CD4-positive, alpha-beta T cell (primary cell): ENCODE measurements at regions of chr16 and their contacts with region 1.

Region 1: DNA sequence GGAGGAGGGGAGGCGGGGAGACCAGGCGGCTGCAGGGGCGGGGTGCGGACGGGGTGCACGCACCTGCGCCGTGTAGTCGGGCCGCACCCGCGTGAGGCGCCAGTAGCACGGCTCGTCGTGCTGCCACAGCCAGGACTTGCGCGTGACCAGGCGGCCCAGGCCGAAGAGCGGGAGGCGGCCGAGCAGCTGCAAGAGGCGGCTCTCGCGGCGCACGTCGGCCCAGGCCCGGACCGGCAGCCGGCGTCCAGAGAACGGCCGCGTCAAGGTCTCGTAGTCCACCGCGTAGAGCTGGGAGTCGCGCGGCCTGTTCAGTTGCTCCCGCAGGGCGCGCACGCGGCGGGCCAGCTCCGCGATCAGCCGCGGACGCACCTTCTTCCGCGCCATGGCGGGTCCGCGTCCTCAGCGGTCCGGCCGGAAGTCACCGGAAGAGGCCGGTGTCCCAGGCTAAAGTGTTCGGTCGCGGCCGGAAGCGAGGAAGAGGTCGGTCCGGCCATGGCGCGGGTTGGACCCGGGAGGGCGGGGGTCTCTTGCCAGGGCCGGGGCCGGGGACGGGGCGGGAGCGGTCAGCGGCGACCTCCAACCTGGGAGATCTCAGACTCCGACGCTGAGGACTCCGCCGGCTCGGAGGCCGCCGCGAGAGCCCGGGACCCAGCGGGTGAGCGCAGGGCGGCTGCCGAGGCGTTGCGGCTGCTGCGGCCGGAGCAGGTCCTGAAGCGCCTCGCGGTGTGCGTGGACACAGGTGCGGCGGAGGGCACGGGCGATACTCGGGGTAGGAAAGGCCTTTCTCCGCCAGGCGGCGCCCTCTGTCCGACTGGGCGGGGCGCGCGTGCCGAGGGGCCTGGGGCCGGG is at the starts of genes EME2 and MRPS34:
- DNase-seq: peak; percentile 61 to 90 (median 77)
- ATAC-seq: peak; percentile 49
- H3K4me3 ChIP-seq: peak within 1 kb of the TSS; percentile 89
- H3K4me3 Mint-ChIP-seq: peak within 1 kb of the TSS; percentile 98
- H3K27ac ChIP-seq: peak within 1 kb of the TSS; percentile 55 to 69
- H3K27ac Mint-ChIP-seq: peak within 1 kb of the TSS; percentile 92
- H3K4me1 ChIP-seq: peaks cover 42% of the 10 kb centered on the region
- H3K4me1 Mint-ChIP-seq: peaks cover 16% of the 10 kb centered on the region
- H3K27me3 ChIP-seq: no peaks in the 10 kb centered on the region
- H3K27me3 Mint-ChIP-seq: no peaks in the 10 kb centered on the region
- CTCF ChIP-seq: peak; percentile 79
- total RNA-seq, gene EME2: 28.6 to 30.8 TPM
- total RNA-seq, gene MRPS34: 25.5 to 26.9 TPM

Region 2: DNA sequence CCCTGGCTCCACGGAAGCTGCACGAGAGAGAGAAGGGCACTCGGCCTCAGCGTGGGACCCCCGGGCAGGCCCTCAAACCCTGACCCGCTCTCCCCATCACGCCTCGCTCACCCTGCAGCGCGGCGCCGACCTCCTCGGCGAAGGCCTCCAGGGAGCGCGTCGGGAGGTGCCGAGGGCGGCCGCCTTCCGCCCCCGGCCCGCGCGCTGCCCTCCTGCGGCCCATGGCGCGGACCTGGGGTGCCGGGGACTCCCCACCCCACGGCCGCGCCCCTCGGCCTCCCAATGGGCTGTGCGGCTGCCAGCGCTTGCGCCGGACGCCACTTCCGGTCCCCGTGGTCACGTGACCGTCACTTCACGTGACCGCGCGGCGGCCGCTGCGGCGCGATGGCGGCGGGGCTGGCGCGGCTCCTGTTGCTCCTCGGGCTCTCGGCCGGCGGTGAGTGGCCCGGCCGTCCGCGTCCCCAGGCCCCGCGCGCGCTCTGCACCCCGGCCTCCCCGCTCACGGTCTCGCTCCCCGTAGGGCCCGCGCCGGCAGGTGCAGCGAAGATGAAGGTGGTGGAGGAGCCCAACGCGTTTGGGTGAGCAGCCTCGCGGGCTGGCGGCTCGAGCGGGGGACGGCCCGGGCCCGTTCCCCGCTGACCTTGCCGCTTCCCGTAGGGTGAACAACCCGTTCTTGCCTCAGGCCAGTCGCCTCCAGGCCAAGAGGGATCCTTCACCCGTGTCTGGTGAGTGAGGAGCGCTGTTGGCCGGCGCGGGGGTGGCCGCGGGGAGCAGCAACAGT is 421.2 kb before region 1 on chr16 and contains the starts of genes GNPTG and TSR3:
- CTCF ChIA-PET with region 1: no interaction called
- POLR2A ChIA-PET with region 1: no interaction called
- intact Hi-C with region 1: loop called in 1 of 2 experiments (anchors 5 kb)
- DNase-seq: peak; percentile 70 to 95 (median 82)
- ATAC-seq: peak; percentile 84
- H3K4me3 ChIP-seq: peak within 1 kb of the TSS; percentile 87
- H3K4me3 Mint-ChIP-seq: peak within 1 kb of the TSS; percentile 90
- H3K27ac ChIP-seq: peak within 1 kb of the TSS in 1 of 2 donors; percentile 46
- H3K27ac Mint-ChIP-seq: peak within 1 kb of the TSS; percentile 89
- H3K4me1 ChIP-seq: peaks cover 54% of the 10 kb centered on the region
- H3K4me1 Mint-ChIP-seq: peaks cover 16% of the 10 kb centered on the region
- H3K27me3 ChIP-seq: no peaks in the 10 kb centered on the region
- H3K27me3 Mint-ChIP-seq: no peaks in the 10 kb centered on the region
- CTCF ChIP-seq: no peak
- total RNA-seq, gene GNPTG: 27.6 to 32.0 TPM
- total RNA-seq, gene TSR3: 19.9 to 21.4 TPM

Region 3: GRCh38 chr16:1667251-1667650 is 105.7 kb before region 1 on chr16:
- CTCF ChIA-PET with region 1: no interaction called
- POLR2A ChIA-PET with region 1: no interaction called
- intact Hi-C with region 1: no loop called
- DNase-seq: no peak
- ATAC-seq: no peak
- H3K4me3 ChIP-seq: no peak overlapping the region
- H3K4me3 Mint-ChIP-seq: no peak overlapping the region
- H3K27ac ChIP-seq: no peak overlapping the region
- H3K27ac Mint-ChIP-seq: no peak overlapping the region
- H3K4me1 ChIP-seq: no peaks in the 10 kb centered on the region
- H3K4me1 Mint-ChIP-seq: no peaks in the 10 kb centered on the region
- H3K27me3 ChIP-seq: no peaks in the 10 kb centered on the region
- H3K27me3 Mint-ChIP-seq: no peaks in the 10 kb centered on the region
- CTCF ChIP-seq: no peak

Region 4: DNA sequence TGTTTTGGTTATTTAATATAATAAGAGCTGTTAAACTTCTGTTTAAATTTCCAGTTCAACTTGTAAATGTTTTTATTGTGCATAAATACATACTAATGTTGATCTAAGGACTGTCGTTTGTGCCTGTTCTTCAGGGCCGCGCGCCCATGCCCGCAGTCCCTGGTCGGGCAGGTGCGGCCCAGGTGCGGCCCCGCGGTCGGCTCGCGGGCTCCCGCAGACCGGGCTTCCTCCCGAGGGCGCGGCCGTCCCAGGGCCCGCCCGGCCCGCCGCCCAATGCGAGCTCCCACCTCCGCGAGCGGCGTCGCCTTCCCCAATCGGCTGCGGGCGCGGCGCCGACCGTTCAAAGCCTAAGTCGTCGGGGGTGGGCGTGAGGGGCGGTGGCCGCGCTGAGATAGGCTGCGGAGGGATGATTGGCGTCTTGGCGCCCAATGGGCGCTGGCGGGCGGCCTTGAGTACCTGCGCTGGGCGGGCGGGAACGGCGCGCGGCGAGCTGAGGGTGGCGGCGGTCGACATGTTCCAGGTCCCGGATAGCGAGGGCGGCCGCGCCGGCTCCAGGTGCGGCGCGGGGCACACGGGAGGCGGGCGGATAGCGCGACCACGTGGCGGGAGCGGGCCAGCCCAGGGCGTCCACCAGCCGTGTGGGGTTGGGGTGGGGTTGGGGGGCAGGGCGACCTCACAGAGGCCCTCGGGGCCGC is 95.0 kb before region 1 on chr16 and contains the start of gene JPT2:
- CTCF ChIA-PET with region 1: no interaction called
- POLR2A ChIA-PET with region 1: interaction called, 4 read pairs
- intact Hi-C with region 1: loop called in 1 of 2 experiments (anchors 5 kb)
- DNase-seq: peak; percentile 90 to 98 (median 95)
- ATAC-seq: peak; percentile 97
- H3K4me3 ChIP-seq: peak within 1 kb of the TSS; percentile 66
- H3K4me3 Mint-ChIP-seq: peak within 1 kb of the TSS; percentile 93
- H3K27ac ChIP-seq: peak within 1 kb of the TSS in 1 of 2 donors; percentile 61
- H3K27ac Mint-ChIP-seq: peak within 1 kb of the TSS; percentile 71
- H3K4me1 ChIP-seq: peaks cover 25% of the 10 kb centered on the region
- H3K4me1 Mint-ChIP-seq: peaks cover 31% of the 10 kb centered on the region
- H3K27me3 ChIP-seq: no peaks in the 10 kb centered on the region
- H3K27me3 Mint-ChIP-seq: no peaks in the 10 kb centered on the region
- CTCF ChIP-seq: no peak
- total RNA-seq, gene JPT2: 2.5 to 3.2 TPM

Region 5: GRCh38 chr16:1826691-1827575 is 54.0 kb after region 1 on chr16 and contains the starts of genes FAHD1 and HAGH:
- CTCF ChIA-PET with region 1: no interaction called
- POLR2A ChIA-PET with region 1: interaction called, 20 read pairs
- intact Hi-C with region 1: loop called (anchors 2 to 5 kb)
- DNase-seq: peak; percentile 82 to 97 (median 88)
- ATAC-seq: peak; percentile 82
- H3K4me3 ChIP-seq: peak within 1 kb of the TSS; percentile 76
- H3K4me3 Mint-ChIP-seq: peak within 1 kb of the TSS; percentile 91
- H3K27ac ChIP-seq: peak within 1 kb of the TSS; percentile 72 to 77
- H3K27ac Mint-ChIP-seq: peak within 1 kb of the TSS; percentile 90
- H3K4me1 ChIP-seq: peaks cover 51% of the 10 kb centered on the region
- H3K4me1 Mint-ChIP-seq: peaks cover 37% of the 10 kb centered on the region
- H3K27me3 ChIP-seq: no peaks in the 10 kb centered on the region
- H3K27me3 Mint-ChIP-seq: no peaks in the 10 kb centered on the region
- CTCF ChIP-seq: no peak
- total RNA-seq, gene FAHD1: 4.1 to 4.5 TPM
- total RNA-seq, gene HAGH: 20.9 to 22.7 TPM

Region 6: GRCh38 chr16:1942810-1943726 is 170.1 kb after region 1 on chr16 and contains the start of gene MSRB1:
- CTCF ChIA-PET with region 1: no interaction called
- POLR2A ChIA-PET with region 1: no interaction called
- intact Hi-C with region 1: loop called in 1 of 2 experiments (anchors 5 kb)
- DNase-seq: peak; percentile 97 to 100 (median 99)
- ATAC-seq: peak; percentile 99
- H3K4me3 ChIP-seq: peak within 1 kb of the TSS; percentile 92
- H3K4me3 Mint-ChIP-seq: peak within 1 kb of the TSS; percentile 93
- H3K27ac ChIP-seq: peak within 1 kb of the TSS; percentile 40 to 43
- H3K27ac Mint-ChIP-seq: peak within 1 kb of the TSS; percentile 47
- H3K4me1 ChIP-seq: peaks cover 28% of the 10 kb centered on the region
- H3K4me1 Mint-ChIP-seq: peaks cover 18% of the 10 kb centered on the region
- H3K27me3 ChIP-seq: no peaks in the 10 kb centered on the region
- H3K27me3 Mint-ChIP-seq: no peaks in the 10 kb centered on the region
- CTCF ChIP-seq: no peak
- total RNA-seq, gene MSRB1: 2.3 to 2.4 TPM